ENCODE measurements at regions of chr2 and their contacts with region 1.

Region 1: DNA sequence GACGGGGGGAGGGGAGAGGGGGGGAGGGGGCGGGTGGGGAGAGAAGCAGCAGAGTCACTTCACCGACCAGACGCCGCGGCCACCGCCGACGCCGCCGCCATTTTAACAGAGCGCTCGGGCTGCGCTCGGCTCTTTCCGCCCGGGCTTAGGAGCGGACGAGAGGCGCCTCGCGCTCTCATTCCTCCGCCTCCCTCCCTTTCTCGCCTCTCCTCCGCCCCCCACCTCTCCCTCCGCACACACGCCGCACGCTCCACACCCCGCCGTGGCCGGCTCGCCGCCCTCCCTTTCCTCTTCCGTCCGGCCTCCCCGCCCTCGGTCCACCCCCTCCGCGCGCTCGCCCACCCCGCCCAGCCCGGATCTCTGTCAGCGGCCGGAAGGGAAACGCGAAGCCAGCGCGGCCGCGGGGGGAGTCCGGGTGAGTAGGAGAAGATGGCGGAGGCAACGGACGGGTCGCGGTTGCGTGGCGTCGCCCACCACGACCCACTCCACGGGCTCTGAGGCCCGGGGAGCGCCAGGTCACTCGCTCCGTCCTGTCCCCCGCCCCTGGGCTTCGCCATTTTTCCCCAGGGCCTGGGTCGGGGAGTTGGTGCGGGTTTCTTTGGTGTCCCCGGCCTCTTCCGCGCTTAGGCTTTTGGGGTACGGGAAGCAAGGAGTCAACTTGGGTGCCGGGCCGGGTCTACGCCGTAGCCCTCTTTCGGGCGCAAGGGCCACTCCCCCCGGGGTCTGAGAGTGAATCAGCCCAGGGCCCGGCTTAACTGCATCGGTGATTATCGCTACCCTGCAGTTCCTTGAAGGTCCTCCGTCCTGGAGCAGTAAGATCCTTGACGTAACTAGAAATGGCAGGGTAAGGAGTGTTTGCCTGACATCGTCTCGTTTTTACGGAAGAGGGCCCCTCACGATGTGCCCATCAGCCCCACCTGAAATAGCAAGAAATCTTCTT is at the start of gene USP34:
- DNase-seq: peak; percentile 77 to 93 (median 88)
- ATAC-seq: peak; percentile 91
- H3K4me3 ChIP-seq: peak within 1 kb of the TSS; percentile 97
- H3K4me3 Mint-ChIP-seq: peak within 1 kb of the TSS; percentile 85 to 99 (median 96)
- H3K27ac ChIP-seq: peak within 1 kb of the TSS; percentile 98
- H3K27ac Mint-ChIP-seq: peak within 1 kb of the TSS; percentile 96 to 99 (median 97)
- H3K4me1 ChIP-seq: peaks cover 14 to 27% of the 10 kb centered on the region in 2 donors
- H3K4me1 Mint-ChIP-seq: peaks cover 11 to 45% (median 33%) of the 10 kb centered on the region in 7 donors
- H3K27me3 ChIP-seq: no peaks in the 10 kb centered on the region
- H3K27me3 Mint-ChIP-seq: no peaks in the 10 kb centered on the region
- total RNA-seq, gene USP34: 109 to 186 (median 165) TPM

Region 2: GRCh38 chr2:61016808-61017555 is 454.3 kb before region 1 on chr2:
- CTCF ChIA-PET with region 1: no interaction called
- POLR2A ChIA-PET with region 1: no interaction called
- intact Hi-C with region 1: loop called (anchors 1 to 2 kb)
- DNase-seq: peak; percentile 41 to 75 (median 72)
- ATAC-seq: peak; percentile 79
- H3K4me3 ChIP-seq: peak overlapping the region; percentile 100
- H3K4me3 Mint-ChIP-seq: peak overlapping the region; percentile 93 to 100 (median 97)
- H3K27ac ChIP-seq: peak overlapping the region; percentile 75
- H3K27ac Mint-ChIP-seq: peak overlapping the region; percentile 90 to 99 (median 95)
- H3K4me1 ChIP-seq: peaks cover 14 to 20% of the 10 kb centered on the region in 2 donors
- H3K4me1 Mint-ChIP-seq: peaks cover 23 to 68% (median 48%) of the 10 kb centered on the region in 7 donors
- H3K27me3 ChIP-seq: no peaks in the 10 kb centered on the region
- H3K27me3 Mint-ChIP-seq: no peaks in the 10 kb centered on the region

Region 3: DNA sequence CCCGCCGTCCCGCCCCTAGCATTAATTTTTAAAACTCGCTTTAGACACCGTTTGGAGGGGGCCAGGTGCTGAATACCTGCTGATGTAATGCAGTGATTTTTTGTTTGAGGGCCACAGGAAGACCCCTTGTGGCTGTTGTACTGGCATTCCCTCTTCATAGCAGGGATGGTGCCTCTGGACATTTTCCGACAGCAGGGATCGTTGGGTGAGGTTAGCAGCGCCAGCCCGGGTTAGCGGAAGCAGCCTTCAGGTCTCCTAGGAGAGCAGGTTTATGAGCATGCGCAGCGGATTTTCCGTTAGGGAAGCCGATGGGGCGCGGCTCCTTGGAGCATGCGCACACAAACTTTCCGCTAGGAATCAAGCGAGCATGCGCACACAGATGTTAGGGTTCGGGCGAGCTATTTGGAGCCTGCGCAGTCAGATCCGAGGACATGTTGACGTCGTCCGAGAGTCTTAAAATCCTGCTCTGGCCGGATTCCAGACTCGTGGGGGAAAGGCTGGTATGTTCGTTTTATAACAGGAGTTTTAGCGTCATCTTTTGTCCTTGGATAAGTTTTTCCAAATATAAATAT is 326.5 kb before region 1 on chr2:
- CTCF ChIA-PET with region 1: no interaction called
- POLR2A ChIA-PET with region 1: no interaction called
- intact Hi-C with region 1: loop called in 1 of 2 experiments (anchors 10 kb)
- DNase-seq: peak; percentile 74 to 90 (median 86)
- ATAC-seq: peak; percentile 92
- H3K4me3 ChIP-seq: peak overlapping the region; percentile 82
- H3K4me3 Mint-ChIP-seq: peak overlapping the region; percentile 88 to 98 (median 94)
- H3K27ac ChIP-seq: peak overlapping the region; percentile 73
- H3K27ac Mint-ChIP-seq: peak overlapping the region; percentile 90 to 98 (median 95)
- H3K4me1 ChIP-seq: peaks cover 4 to 5% of the 10 kb centered on the region in 2 donors
- H3K4me1 Mint-ChIP-seq: peaks cover 0 to 18% (median 7%) of the 10 kb centered on the region in 7 donors
- H3K27me3 ChIP-seq: no peaks in the 10 kb centered on the region
- H3K27me3 Mint-ChIP-seq: peaks cover 0 to 2% (median 0%) of the 10 kb centered on the region in 5 donors

Region 4: DNA sequence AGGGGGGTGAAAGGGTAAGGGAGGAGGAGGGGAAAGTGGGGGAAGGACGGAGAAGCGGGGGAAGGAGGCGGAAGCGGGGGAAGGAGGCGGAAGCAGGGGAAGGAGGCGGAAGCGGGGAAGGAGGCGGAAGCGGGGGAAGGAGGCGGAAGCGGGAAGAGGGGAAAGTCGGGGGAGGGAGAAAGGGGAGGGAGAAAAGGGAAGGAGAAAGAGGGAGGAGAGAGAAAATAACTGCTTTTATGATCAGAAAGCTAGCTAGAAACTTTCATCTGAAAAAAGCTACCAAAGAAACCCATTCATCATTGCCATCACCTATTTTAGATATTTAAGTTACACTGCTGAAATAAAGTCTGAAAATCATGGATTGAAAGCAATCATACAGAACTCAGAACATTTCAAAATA is 72.8 kb before region 1 on chr2:
- CTCF ChIA-PET with region 1: no interaction called
- POLR2A ChIA-PET with region 1: no interaction called
- intact Hi-C with region 1: no loop called
- DNase-seq: no peak
- ATAC-seq: no peak
- H3K4me3 ChIP-seq: no peak overlapping the region
- H3K4me3 Mint-ChIP-seq: no peak overlapping the region
- H3K27ac ChIP-seq: no peak overlapping the region
- H3K27ac Mint-ChIP-seq: no peak overlapping the region
- H3K4me1 ChIP-seq: no peaks in the 10 kb centered on the region
- H3K4me1 Mint-ChIP-seq: no peaks in the 10 kb centered on the region
- H3K27me3 ChIP-seq: no peaks in the 10 kb centered on the region
- H3K27me3 Mint-ChIP-seq: no peaks in the 10 kb centered on the region

Region 5: DNA sequence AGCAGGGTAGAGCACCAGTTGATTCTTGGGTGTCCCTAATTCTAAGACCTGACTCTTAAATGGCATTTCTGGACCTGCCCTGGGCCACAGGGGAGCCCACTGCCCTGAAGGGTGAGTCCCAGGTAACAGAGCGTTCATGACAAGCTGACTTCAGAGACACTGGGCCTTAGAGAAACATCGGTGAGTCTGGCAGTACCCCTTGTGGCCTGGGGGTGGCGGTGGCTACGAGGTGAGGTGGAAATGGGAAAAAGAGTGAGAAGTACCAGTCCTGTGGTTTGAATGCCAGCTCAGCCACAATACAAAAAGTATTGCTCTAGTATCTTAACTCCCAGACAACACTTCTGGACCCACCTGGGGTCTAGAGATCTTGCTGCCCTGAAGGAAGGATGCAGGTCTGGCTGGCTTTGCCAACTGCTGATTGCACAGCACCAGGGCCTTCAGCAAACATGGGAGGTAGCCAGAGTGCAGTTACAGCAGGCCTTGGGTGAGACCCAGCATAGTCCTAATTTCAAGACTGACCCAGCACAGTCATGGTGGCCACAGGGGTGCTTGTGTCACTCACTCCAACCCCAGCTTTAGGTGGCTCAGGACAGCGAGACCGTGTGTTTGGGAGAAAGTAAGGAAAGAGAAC is 44.9 kb before region 1 on chr2:
- CTCF ChIA-PET with region 1: interaction called, 6 read pairs
- POLR2A ChIA-PET with region 1: interaction called, 11 read pairs
- intact Hi-C with region 1: loop called (anchors 1 kb)
- DNase-seq: peak; percentile 54 to 80 (median 73)
- ATAC-seq: peak; percentile 94
- H3K4me3 ChIP-seq: no peak overlapping the region
- H3K4me3 Mint-ChIP-seq: peak overlapping the region in 9 of 10 donors; percentile 16 to 78 (median 58)
- H3K27ac ChIP-seq: peak overlapping the region; percentile 72
- H3K27ac Mint-ChIP-seq: peak overlapping the region; percentile 65 to 99 (median 95)
- H3K4me1 ChIP-seq: peaks cover 11 to 34% of the 10 kb centered on the region in 2 donors
- H3K4me1 Mint-ChIP-seq: peaks cover 46 to 84% (median 71%) of the 10 kb centered on the region in 7 donors
- H3K27me3 ChIP-seq: no peaks in the 10 kb centered on the region
- H3K27me3 Mint-ChIP-seq: no peaks in the 10 kb centered on the region

Region 6: GRCh38 chr2:61645911-61646310 is 174.7 kb after region 1 on chr2:
- CTCF ChIA-PET with region 1: no interaction called
- POLR2A ChIA-PET with region 1: no interaction called
- intact Hi-C with region 1: no loop called
- DNase-seq: no peak
- ATAC-seq: no peak
- H3K4me3 ChIP-seq: no peak overlapping the region
- H3K4me3 Mint-ChIP-seq: no peak overlapping the region
- H3K27ac ChIP-seq: no peak overlapping the region
- H3K27ac Mint-ChIP-seq: no peak overlapping the region
- H3K4me1 ChIP-seq: no peaks in the 10 kb centered on the region
- H3K4me1 Mint-ChIP-seq: no peaks in the 10 kb centered on the region
- H3K27me3 ChIP-seq: no peaks in the 10 kb centered on the region
- H3K27me3 Mint-ChIP-seq: no peaks in the 10 kb centered on the region

Region 7: DNA sequence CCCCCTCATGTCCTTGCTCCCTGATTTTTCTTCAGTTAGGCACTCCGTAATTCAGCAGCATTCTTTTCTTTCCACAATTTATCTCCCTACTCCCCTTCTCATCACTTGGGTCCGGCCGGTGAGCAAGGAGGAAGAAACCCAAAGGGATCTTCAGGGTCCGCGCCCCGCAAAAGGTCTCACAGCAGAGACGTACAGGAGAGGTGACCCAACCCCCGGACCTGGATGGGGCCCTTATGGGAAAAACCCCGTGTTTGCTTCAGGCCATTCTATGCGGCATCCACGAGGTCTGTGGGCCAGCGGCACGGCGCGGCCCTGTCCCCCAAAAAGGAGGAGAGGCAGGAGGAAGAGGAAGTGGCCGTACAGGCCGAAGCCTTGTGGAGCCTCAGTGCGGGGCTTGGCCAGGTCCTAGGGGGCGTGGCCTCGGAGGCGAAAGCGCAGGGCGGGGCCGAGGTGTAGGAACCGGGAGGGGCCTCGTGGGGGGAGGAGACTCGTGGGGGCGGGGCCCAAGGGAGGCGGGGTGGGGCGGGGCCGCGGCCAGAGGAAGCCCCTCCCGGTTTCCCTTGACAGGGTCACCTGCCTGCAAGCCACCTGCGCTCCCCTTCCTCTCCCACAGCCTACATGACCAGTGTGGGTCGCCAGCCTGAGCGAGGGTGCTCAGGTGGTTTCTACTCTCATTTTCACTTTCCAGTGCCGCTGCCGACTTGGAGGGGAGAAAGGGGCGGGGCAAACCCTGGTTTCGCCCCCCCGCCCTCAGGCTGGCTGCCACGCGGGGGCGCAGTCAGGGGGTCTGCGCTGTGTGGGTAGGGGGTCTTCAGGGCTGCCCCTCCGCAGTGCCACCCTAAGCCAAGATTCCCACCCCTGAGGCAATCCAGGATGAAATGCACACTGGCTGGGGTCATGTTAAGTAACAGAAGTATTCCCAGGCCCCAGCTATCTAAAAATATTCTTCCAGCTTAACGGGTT is 223.4 kb after region 1 on chr2:
- CTCF ChIA-PET with region 1: no interaction called
- POLR2A ChIA-PET with region 1: no interaction called
- intact Hi-C with region 1: loop called (anchors 2 kb)
- DNase-seq: peak; percentile 62 to 91 (median 77)
- ATAC-seq: peak; percentile 99
- H3K4me3 ChIP-seq: peak overlapping the region; percentile 74
- H3K4me3 Mint-ChIP-seq: peak overlapping the region; percentile 84 to 96 (median 91)
- H3K27ac ChIP-seq: peak overlapping the region; percentile 62
- H3K27ac Mint-ChIP-seq: peak overlapping the region; percentile 74 to 92 (median 87)
- H3K4me1 ChIP-seq: peaks cover 0 to 5% of the 10 kb centered on the region in 2 donors
- H3K4me1 Mint-ChIP-seq: peaks cover 4 to 19% (median 15%) of the 10 kb centered on the region in 7 donors
- H3K27me3 ChIP-seq: no peaks in the 10 kb centered on the region
- H3K27me3 Mint-ChIP-seq: peaks cover 0 to 4% (median 0%) of the 10 kb centered on the region in 5 donors

Region 8: GRCh38 chr2:61888267-61889055 is 417.2 kb after region 1 on chr2 and contains the start of gene CCT4:
- CTCF ChIA-PET with region 1: no interaction called
- POLR2A ChIA-PET with region 1: no interaction called
- intact Hi-C with region 1: loop called (anchors 1 to 10 kb)
- DNase-seq: peak; percentile 86 to 99 (median 95)
- ATAC-seq: peak; percentile 94
- H3K4me3 ChIP-seq: peak within 1 kb of the TSS; percentile 92
- H3K4me3 Mint-ChIP-seq: peak within 1 kb of the TSS; percentile 85 to 100 (median 99)
- H3K27ac ChIP-seq: peak within 1 kb of the TSS; percentile 98
- H3K27ac Mint-ChIP-seq: peak within 1 kb of the TSS; percentile 98 to 100 (median 100)
- H3K4me1 ChIP-seq: peaks cover 15 to 17% of the 10 kb centered on the region in 2 donors
- H3K4me1 Mint-ChIP-seq: peaks cover 11 to 34% (median 29%) of the 10 kb centered on the region in 7 donors
- H3K27me3 ChIP-seq: no peaks in the 10 kb centered on the region
- H3K27me3 Mint-ChIP-seq: no peaks in the 10 kb centered on the region
- total RNA-seq, gene CCT4: 84.2 to 177 (median 90.3) TPM